Panc1 (cell line): ENCODE measurements at regions of chr3 and their contacts with region 1.

Region 1: GRCh38 chr3:130956281-130956680 is 62.4 kb downstream of the ATP2C1 start:
- DNase-seq: no peak
- ATAC-seq: no peak
- H3K4me3 ChIP-seq: no peak overlapping the region
- H3K27ac ChIP-seq: no peak overlapping the region
- H3K4me1 ChIP-seq: no peaks in the 10 kb centered on the region
- H3K27me3 ChIP-seq: no peaks in the 10 kb centered on the region
- CTCF ChIP-seq: no peak

Region 2: GRCh38 chr3:130997291-130997690 is 41.0 kb after region 1 on chr3:
- CTCF ChIA-PET with region 1: no interaction called
- POLR2A ChIA-PET with region 1: interaction called, 11 read pairs
- in situ Hi-C with region 1: no loop called
- intact Hi-C with region 1: no loop called
- DNase-seq: no peak
- ATAC-seq: no peak
- H3K4me3 ChIP-seq: no peak overlapping the region
- H3K27ac ChIP-seq: no peak overlapping the region
- H3K4me1 ChIP-seq: no peaks in the 10 kb centered on the region
- H3K27me3 ChIP-seq: no peaks in the 10 kb centered on the region
- CTCF ChIP-seq: no peak